IMR-90 (cell line): ENCODE measurements at regions of chr17 and their contacts with region 1.

Region 1: GRCh38 chr17:33267260-33267790 is 25.8 kb downstream of the ASIC2 start:
- DNase-seq: peak; percentile 94
- ATAC-seq: peak; percentile 89
- H3K4me3 ChIP-seq: no peak overlapping the region
- H3K27ac ChIP-seq: peak overlapping the region; percentile 76
- H3K4me1 ChIP-seq: peaks cover 14% of the 10 kb centered on the region
- H3K27me3 ChIP-seq: no peaks in the 10 kb centered on the region
- CTCF ChIP-seq: no peak
- POLR2A ChIP-seq: no peak
- RAD21 ChIP-seq: no peak

Region 2: DNA sequence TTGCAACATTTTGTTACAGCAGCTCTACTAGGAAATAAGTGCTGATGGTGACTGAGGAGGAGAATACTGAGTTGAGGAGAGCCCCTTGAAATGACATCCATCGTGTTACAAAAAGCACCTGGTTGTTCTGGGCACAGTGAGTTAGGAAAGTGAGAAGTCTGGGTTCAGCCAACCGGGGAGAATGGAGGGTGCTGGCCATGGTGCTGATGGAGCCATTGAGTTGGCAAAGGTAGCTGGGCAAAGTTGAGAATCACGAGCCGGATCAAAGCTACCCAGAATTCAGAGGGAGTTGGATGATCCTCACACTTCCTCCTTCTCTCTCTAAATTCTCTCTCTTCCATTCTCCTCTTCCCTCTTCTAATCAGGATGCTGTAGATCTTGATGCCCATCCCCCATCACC is 60.8 kb after region 1 on chr17:
- CTCF ChIA-PET with region 1: no interaction called
- POLR2A ChIA-PET with region 1: no interaction called
- dilution Hi-C with region 1: no loop called
- in situ Hi-C with region 1: loop called (anchors 10 kb)
- intact Hi-C with region 1: no loop called
- DNase-seq: peak; percentile 4
- ATAC-seq: no peak
- H3K4me3 ChIP-seq: no peak overlapping the region
- H3K27ac ChIP-seq: no peak overlapping the region
- H3K4me1 ChIP-seq: no peaks in the 10 kb centered on the region
- H3K27me3 ChIP-seq: no peaks in the 10 kb centered on the region
- CTCF ChIP-seq: no peak
- POLR2A ChIP-seq: no peak
- RAD21 ChIP-seq: no peak

Region 3: DNA sequence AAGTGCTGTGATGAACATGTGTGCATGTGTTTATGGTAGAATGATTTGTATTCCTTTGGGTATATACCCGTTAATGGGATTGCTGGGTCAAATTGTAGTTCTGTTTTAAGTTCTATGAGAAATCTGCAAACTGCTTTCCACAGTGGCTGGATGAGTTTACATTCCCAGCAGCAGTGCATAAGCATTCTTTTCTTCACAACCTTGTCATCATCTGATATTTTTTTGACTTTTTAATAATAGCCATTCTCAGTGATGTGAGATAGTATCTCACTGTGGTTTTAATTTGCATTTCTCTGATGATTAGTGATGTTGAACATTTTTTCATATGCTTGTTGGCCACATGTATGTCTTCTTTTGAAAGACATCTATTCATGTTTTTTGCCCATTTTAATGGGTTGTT is 1070.4 kb after region 1 on chr17:
- CTCF ChIA-PET with region 1: no interaction called
- POLR2A ChIA-PET with region 1: no interaction called
- dilution Hi-C with region 1: no loop called
- in situ Hi-C with region 1: no loop called
- intact Hi-C with region 1: no loop called
- DNase-seq: no peak
- ATAC-seq: no peak
- H3K4me3 ChIP-seq: no peak overlapping the region
- H3K27ac ChIP-seq: no peak overlapping the region
- H3K4me1 ChIP-seq: no peaks in the 10 kb centered on the region
- H3K27me3 ChIP-seq: no peaks in the 10 kb centered on the region; the same call in 1 of the 2 replicates
- CTCF ChIP-seq: no peak
- POLR2A ChIP-seq: no peak
- RAD21 ChIP-seq: no peak